Activated CD4-positive, alpha-beta T cell treated with anti-CD3 and anti-CD28 coated beads for 36 hours (primary cell): ENCODE measurements at regions of chr6 and their contacts with region 1.

Region 1: DNA sequence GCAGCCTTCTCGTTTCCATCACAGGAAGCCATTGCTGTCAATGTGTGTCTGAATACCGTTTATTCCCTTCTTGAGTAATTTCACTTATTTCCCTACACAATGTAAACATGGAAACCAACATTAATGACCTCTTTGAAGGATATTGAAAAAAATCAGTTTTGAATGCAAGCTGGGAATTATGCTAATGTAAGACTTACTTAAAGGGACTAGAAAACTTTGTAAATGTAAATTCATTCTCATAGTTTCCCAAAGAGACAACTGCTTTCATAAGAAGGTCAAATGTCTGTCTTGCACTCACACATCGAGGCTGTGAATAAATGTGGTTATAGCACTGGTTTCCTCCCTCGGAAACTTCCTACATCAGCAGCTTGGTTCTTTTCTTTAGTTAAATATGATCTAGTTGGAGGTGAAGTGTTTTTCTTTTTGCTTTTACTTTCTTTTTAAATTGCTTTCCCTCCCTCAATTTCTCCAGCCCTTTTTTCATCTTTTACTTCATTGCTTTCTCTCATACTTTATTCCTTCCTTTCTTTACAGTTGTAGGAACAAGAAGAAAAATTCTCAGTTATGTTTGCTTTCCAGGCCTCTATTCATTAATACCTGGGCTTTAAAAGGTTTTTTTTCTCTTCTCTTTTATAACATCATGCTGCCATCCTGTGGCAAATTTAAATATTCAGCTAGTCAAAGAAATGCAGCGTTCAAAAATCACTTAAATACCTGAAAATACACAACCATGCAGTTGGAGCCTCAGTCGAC is 108.3 kb downstream of the TNFAIP3 start:
- DNase-seq: peak; percentile 51
- ATAC-seq: peak; percentile 60
- H3K4me3 Mint-ChIP-seq: peak overlapping the region; percentile 55
- H3K27ac Mint-ChIP-seq: peak overlapping the region; percentile 90
- H3K4me1 Mint-ChIP-seq: peaks cover 72% of the 10 kb centered on the region
- H3K27me3 Mint-ChIP-seq: no peaks in the 10 kb centered on the region

Region 2: GRCh38 chr6:137680705-137681346 is 294.5 kb before region 1 on chr6:
- CTCF ChIA-PET with region 1: interaction called, 5 read pairs
- POLR2A ChIA-PET with region 1: no interaction called
- intact Hi-C with region 1: loop called in 1 of 2 experiments (anchors 1 kb)
- DNase-seq: no peak
- ATAC-seq: peak; percentile 62
- H3K4me3 Mint-ChIP-seq: peak overlapping the region; percentile 2
- H3K27ac Mint-ChIP-seq: peak overlapping the region; percentile 67
- H3K4me1 Mint-ChIP-seq: peaks cover 53% of the 10 kb centered on the region
- H3K27me3 Mint-ChIP-seq: peaks cover 12% of the 10 kb centered on the region

Region 3: DNA sequence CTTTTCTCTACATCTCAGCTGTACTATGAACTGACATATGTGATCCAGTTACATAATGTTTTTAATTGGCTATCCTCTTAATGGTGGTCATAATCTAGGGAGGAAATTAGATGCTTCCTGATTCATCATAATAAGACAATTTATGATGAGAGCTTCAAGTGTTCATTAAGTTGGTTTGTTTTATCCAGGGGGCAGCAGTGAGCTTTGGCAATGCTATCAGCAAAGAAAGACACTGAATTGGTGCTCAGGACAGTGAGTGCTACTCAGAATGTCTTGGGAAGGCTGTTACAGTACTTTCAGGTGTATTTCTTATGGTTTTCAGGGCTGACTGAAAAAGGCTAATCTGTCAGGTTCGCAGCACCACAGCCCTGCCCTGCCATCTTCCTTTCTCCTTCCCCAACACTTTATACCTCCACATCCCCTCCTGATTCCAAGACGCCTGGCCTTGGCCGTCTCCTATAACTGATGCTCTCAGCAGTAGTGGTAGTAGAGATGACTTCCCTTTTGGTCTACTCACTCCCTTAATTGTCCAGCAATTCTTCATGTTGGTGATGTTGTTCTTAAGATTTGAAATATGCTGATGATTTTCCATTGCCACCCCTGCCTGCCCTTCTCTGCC is 175.3 kb before region 1 on chr6:
- CTCF ChIA-PET with region 1: interaction called, 5 read pairs
- POLR2A ChIA-PET with region 1: no interaction called
- intact Hi-C with region 1: loop called in 1 of 2 experiments (anchors 10 kb)
- DNase-seq: peak; percentile 76
- ATAC-seq: peak; percentile 80
- H3K4me3 Mint-ChIP-seq: no peak overlapping the region
- H3K27ac Mint-ChIP-seq: peak overlapping the region; percentile 84
- H3K4me1 Mint-ChIP-seq: peaks cover 65% of the 10 kb centered on the region
- H3K27me3 Mint-ChIP-seq: no peaks in the 10 kb centered on the region

Region 4: GRCh38 chr6:137927777-137928218 is 47.6 kb before region 1 on chr6:
- CTCF ChIA-PET with region 1: interaction called, 3 read pairs
- POLR2A ChIA-PET with region 1: no interaction called
- intact Hi-C with region 1: loop called (anchors 1 kb)
- DNase-seq: peak; percentile 86
- ATAC-seq: peak; percentile 97
- H3K4me3 Mint-ChIP-seq: peak overlapping the region; percentile 59
- H3K27ac Mint-ChIP-seq: peak overlapping the region; percentile 94
- H3K4me1 Mint-ChIP-seq: peaks cover 58% of the 10 kb centered on the region
- H3K27me3 Mint-ChIP-seq: no peaks in the 10 kb centered on the region

Region 5: GRCh38 chr6:138145402-138145801 is 170.0 kb after region 1 on chr6:
- CTCF ChIA-PET with region 1: no interaction called
- POLR2A ChIA-PET with region 1: no interaction called
- intact Hi-C with region 1: no loop called
- DNase-seq: no peak
- ATAC-seq: no peak
- H3K4me3 Mint-ChIP-seq: no peak overlapping the region
- H3K27ac Mint-ChIP-seq: no peak overlapping the region
- H3K4me1 Mint-ChIP-seq: no peaks in the 10 kb centered on the region
- H3K27me3 Mint-ChIP-seq: peaks cover 24% of the 10 kb centered on the region

Region 6: GRCh38 chr6:138912308-138912707 is 936.9 kb after region 1 on chr6:
- CTCF ChIA-PET with region 1: no interaction called
- POLR2A ChIA-PET with region 1: no interaction called
- intact Hi-C with region 1: no loop called
- DNase-seq: no peak
- ATAC-seq: no peak
- H3K4me3 Mint-ChIP-seq: no peak overlapping the region
- H3K27ac Mint-ChIP-seq: no peak overlapping the region
- H3K4me1 Mint-ChIP-seq: no peaks in the 10 kb centered on the region
- H3K27me3 Mint-ChIP-seq: no peaks in the 10 kb centered on the region